Caco-2 (cell line): ENCODE measurements at regions of chr6 and their contacts with region 1.

Region 1: GRCh38 chr6:89371849-89372505 is 19.5 kb upstream of the UBE2J1 start:
- DNase-seq: peak; percentile 56 to 81
- H3K4me3 ChIP-seq: no peak overlapping the region
- H3K4me3 Mint-ChIP-seq: no peak overlapping the region
- H3K27ac Mint-ChIP-seq: no peak overlapping the region
- H3K4me1 ChIP-seq: no peaks in the 10 kb centered on the region
- H3K4me1 Mint-ChIP-seq: no peaks in the 10 kb centered on the region
- H3K27me3 ChIP-seq: no peaks in the 10 kb centered on the region
- H3K27me3 Mint-ChIP-seq: no peaks in the 10 kb centered on the region
- CTCF ChIP-seq: peak; percentile 91 to 97

Region 2: DNA sequence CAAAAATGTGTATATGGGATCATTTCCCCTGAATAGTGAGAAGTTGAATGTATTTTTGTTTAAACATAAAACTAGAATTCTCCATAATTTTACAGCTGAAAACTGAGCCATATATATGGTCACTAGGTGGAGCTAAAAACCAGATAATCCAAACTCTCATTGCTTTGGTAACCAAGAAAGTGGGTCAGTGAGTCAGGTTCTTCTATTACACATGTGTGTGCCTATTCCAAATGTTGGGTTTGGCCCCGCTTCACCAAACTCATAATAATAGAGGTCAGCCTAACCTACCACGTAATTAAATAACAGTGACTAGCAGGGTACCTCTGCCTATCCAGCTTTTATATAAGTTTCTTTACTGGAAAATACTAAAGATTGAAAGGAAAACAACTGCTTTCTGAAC is 389.3 kb before region 1 on chr6:
- CTCF ChIA-PET with region 1: no interaction called
- POLR2A ChIA-PET with region 1: no interaction called
- intact Hi-C with region 1: loop called (anchors 2 kb)
- DNase-seq: peak in 1 of 2 experiments; percentile 43
- H3K4me3 ChIP-seq: no peak overlapping the region
- H3K4me3 Mint-ChIP-seq: no peak overlapping the region
- H3K27ac Mint-ChIP-seq: no peak overlapping the region
- H3K4me1 ChIP-seq: no peaks in the 10 kb centered on the region
- H3K4me1 Mint-ChIP-seq: no peaks in the 10 kb centered on the region
- H3K27me3 ChIP-seq: no peaks in the 10 kb centered on the region
- H3K27me3 Mint-ChIP-seq: peaks cover 3% of the 10 kb centered on the region
- CTCF ChIP-seq: peak; percentile 60

Region 3: GRCh38 chr6:89311853-89312531 is 60.0 kb before region 1 on chr6:
- CTCF ChIA-PET with region 1: interaction called, 9 read pairs
- POLR2A ChIA-PET with region 1: no interaction called
- intact Hi-C with region 1: loop called (anchors 1 kb)
- DNase-seq: peak in 1 of 2 experiments; percentile 48
- H3K4me3 ChIP-seq: no peak overlapping the region
- H3K4me3 Mint-ChIP-seq: no peak overlapping the region
- H3K27ac Mint-ChIP-seq: peak overlapping the region; percentile 71
- H3K4me1 ChIP-seq: peaks cover 4% of the 10 kb centered on the region
- H3K4me1 Mint-ChIP-seq: peaks cover 19% of the 10 kb centered on the region
- H3K27me3 ChIP-seq: no peaks in the 10 kb centered on the region
- H3K27me3 Mint-ChIP-seq: no peaks in the 10 kb centered on the region
- CTCF ChIP-seq: peak in 1 of 2 experiments; percentile 63

Region 4: DNA sequence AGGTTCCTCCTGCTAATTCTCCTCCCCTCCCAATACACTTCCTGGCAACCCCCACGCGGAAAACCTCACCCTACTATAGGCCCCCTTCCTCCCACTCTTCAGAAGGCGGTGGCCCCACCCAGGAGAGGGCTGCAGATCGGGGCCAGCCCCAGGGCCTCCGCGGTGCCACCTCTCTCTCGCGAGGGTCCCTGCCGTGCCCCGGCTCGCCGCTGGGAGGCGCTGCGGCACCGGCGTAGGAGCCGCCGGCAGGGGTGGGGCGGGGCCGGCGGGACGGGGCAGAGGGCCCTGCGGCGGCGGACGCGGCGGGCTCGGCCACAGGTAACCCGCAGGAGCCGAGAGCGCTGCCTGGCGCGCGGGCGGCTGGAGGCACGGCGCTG is 60.9 kb after region 1 on chr6 and contains the start of gene ANKRD6:
- CTCF ChIA-PET with region 1: no interaction called
- POLR2A ChIA-PET with region 1: no interaction called
- intact Hi-C with region 1: loop called (anchors 5 kb)
- DNase-seq: peak; percentile 50 to 91
- H3K4me3 ChIP-seq: peak within 1 kb of the TSS; percentile 59
- H3K4me3 Mint-ChIP-seq: peak within 1 kb of the TSS; percentile 65
- H3K27ac Mint-ChIP-seq: no peak within 1 kb of the TSS
- H3K4me1 ChIP-seq: peaks cover under 1% of the 10 kb centered on the region; the same call in 1 of the 2 replicates
- H3K4me1 Mint-ChIP-seq: peaks cover 6% of the 10 kb centered on the region
- H3K27me3 ChIP-seq: no peaks in the 10 kb centered on the region
- H3K27me3 Mint-ChIP-seq: peaks cover 13% of the 10 kb centered on the region
- CTCF ChIP-seq: peak; percentile 72 to 83
- total RNA-seq, gene ANKRD6: 20.5 and 25.6 TPM in 2 replicates

Region 5: DNA sequence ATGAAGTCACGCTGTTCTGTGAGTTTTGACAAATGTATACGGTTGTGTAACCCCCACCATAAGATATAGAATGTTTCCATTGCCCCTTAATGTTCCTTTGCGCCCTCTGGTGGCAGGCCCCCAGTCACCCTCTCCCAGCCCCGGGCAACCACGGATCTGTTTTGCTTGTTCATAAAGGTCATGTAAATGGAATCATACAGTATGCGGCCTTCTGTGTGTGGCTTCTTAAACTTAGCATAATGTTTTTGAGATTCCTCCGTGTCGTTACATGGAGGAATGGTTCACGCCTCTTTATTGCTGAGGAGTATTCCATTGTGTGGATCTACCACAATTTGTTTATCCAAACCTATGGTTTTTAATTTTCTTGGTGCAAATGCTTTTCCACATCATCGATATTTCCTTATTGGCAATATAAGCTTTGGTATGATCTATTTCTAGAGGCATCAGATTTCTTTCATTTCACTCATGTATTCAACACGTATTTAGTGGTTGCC is 238.2 kb after region 1 on chr6:
- CTCF ChIA-PET with region 1: interaction called, 4 read pairs
- POLR2A ChIA-PET with region 1: no interaction called
- intact Hi-C with region 1: loop called (anchors 1 kb)
- DNase-seq: peak; percentile 60 to 77
- H3K4me3 ChIP-seq: no peak overlapping the region
- H3K4me3 Mint-ChIP-seq: no peak overlapping the region
- H3K27ac Mint-ChIP-seq: no peak overlapping the region
- H3K4me1 ChIP-seq: no peaks in the 10 kb centered on the region
- H3K4me1 Mint-ChIP-seq: no peaks in the 10 kb centered on the region
- H3K27me3 ChIP-seq: no peaks in the 10 kb centered on the region
- H3K27me3 Mint-ChIP-seq: no peaks in the 10 kb centered on the region
- CTCF ChIP-seq: peak; percentile 84 to 92